ENCODE measurements at regions of chr22 and their contacts with region 1.

Region 1: GRCh38 chr22:30968924-30969539 is at the start of gene TUG1:
- DNase-seq: peak; percentile 98
- H3K4me3 Mint-ChIP-seq: peak within 1 kb of the TSS; percentile 88
- H3K27ac Mint-ChIP-seq: peak within 1 kb of the TSS; percentile 88
- H3K4me1 Mint-ChIP-seq: peaks cover 28% of the 10 kb centered on the region
- H3K27me3 Mint-ChIP-seq: no peaks in the 10 kb centered on the region
- CTCF ChIP-seq: no peak
- total RNA-seq, gene TUG1: 85.5 and 99.0 TPM in 2 replicates

Region 2: GRCh38 chr22:30763815-30764686 is 205.0 kb before region 1 on chr22:
- CTCF ChIA-PET with region 1: interaction called, 11 read pairs
- POLR2A ChIA-PET with region 1: no interaction called
- intact Hi-C with region 1: no loop called
- DNase-seq: peak; percentile 91
- H3K4me3 Mint-ChIP-seq: no peak overlapping the region
- H3K27ac Mint-ChIP-seq: peak overlapping the region; percentile 10
- H3K4me1 Mint-ChIP-seq: peaks cover 10% of the 10 kb centered on the region
- H3K27me3 Mint-ChIP-seq: no peaks in the 10 kb centered on the region
- CTCF ChIP-seq: peak; percentile 71

Region 3: DNA sequence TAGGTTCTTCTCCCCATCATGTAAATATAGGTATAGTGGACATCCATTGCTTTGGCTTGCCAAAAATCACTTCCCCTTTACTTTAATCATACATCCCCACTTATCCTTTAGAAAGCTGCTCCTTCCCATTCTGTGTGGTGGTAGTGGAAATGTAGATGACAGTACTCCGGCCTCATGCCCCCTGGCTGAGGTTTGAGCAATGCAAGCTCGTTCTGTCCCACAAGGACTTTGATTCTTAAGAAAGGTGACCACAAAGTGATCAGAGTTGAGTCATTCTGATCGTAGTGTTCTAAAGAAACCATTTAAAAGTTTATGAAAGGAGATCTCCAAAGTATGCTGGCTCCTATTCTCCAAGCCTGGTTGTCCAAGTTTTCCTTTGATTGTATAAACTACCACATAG is 10.9 kb after region 1 on chr22:
- CTCF ChIA-PET with region 1: interaction called, 4 read pairs
- POLR2A ChIA-PET with region 1: interaction called, 40 read pairs
- intact Hi-C with region 1: no loop called
- DNase-seq: no peak
- H3K4me3 Mint-ChIP-seq: no peak overlapping the region
- H3K27ac Mint-ChIP-seq: no peak overlapping the region
- H3K4me1 Mint-ChIP-seq: no peaks in the 10 kb centered on the region
- H3K27me3 Mint-ChIP-seq: no peaks in the 10 kb centered on the region
- CTCF ChIP-seq: no peak

Region 4: DNA sequence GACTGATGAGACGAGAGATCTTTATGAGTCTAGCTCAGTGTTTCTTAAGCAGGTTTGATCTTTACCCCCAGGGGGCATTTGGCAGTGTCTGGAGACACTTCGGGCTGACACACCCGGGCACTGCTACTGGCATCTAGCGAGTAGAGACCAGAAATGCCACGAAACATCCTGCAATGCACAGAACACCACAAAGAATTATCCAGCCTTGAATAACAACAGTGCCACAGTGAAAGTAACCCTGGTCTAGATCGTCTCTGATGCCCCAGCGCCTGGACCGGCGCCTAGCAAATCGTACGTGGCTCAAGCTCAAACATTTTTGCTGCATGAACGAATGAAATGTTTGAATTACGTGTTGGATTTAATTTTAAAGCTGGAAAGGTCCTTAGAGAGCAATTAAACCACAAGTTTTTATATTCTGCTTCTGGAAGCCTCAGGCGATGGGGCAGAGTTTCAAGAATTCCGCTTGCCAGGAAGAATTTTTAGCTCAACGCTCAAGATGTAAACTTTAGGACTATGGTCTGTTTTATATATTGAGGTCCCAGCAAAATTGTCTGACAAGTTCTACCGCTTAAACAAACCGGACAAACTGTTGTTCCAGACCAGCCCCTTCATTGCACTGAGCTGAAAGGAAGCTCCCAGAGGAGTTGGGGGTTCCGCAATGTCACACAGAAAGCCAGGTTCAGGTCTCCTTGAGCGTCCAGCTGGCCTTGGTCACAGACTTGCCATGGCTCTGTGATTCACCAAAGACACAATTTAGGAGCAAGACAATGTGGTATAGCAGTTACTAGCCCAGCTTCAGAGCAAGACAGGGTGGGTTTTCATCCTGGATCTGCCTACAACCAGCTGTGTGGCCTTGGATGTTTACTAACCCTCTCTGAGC is 67.9 kb after region 1 on chr22:
- CTCF ChIA-PET with region 1: no interaction called
- POLR2A ChIA-PET with region 1: interaction called, 14 read pairs
- intact Hi-C with region 1: no loop called
- DNase-seq: peak; percentile 78
- H3K4me3 Mint-ChIP-seq: peak overlapping the region; percentile 46
- H3K27ac Mint-ChIP-seq: peak overlapping the region; percentile 11
- H3K4me1 Mint-ChIP-seq: peaks cover 14% of the 10 kb centered on the region
- H3K27me3 Mint-ChIP-seq: no peaks in the 10 kb centered on the region
- CTCF ChIP-seq: no peak

Region 5: GRCh38 chr22:31055635-31056159 is 86.7 kb after region 1 on chr22:
- CTCF ChIA-PET with region 1: no interaction called
- POLR2A ChIA-PET with region 1: interaction called, 43 read pairs
- intact Hi-C with region 1: no loop called
- DNase-seq: peak; percentile 97
- H3K4me3 Mint-ChIP-seq: no peak overlapping the region
- H3K27ac Mint-ChIP-seq: peak overlapping the region; percentile 84
- H3K4me1 Mint-ChIP-seq: peaks cover 9% of the 10 kb centered on the region
- H3K27me3 Mint-ChIP-seq: no peaks in the 10 kb centered on the region
- CTCF ChIP-seq: no peak

Region 6: DNA sequence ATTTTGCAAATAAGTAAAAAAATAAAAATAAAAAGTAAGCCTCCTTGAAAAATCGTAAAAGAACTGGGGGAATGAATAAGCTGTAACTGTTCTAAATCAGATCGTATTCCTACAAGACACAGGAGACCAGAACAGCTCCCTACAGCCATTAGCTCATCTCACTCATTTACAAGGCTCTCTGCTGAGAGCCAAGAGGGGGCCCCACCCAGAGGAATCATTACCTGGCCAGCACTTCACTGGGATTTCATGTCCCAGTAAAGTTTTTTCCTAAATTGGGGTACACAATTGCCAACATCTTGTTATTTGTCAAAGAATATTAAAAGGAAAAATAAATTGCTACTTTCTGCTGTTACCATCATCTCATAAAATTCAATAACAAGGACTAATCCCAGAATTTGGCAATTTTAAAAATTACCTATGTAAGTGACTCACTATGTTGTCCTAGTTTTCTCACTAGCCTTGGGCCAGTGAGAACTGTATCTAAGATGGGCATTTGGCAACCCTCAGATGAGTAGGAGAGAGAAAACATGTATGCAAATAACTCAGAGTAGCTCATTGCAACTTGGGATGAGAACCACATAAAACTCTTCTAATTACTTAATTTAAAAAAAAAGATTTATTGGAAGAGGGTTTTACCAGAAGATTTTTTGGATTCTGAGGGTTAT is 93.7 kb after region 1 on chr22:
- CTCF ChIA-PET with region 1: interaction called, 4 read pairs
- POLR2A ChIA-PET with region 1: interaction called, 43 read pairs
- intact Hi-C with region 1: no loop called
- DNase-seq: peak; percentile 83
- H3K4me3 Mint-ChIP-seq: no peak overlapping the region
- H3K27ac Mint-ChIP-seq: peak overlapping the region; percentile 82
- H3K4me1 Mint-ChIP-seq: peaks cover 7% of the 10 kb centered on the region
- H3K27me3 Mint-ChIP-seq: no peaks in the 10 kb centered on the region
- CTCF ChIP-seq: no peak